WTC11 (cell line): ENCODE measurements at regions of chr1 and their contacts with region 1.

Region 1: DNA sequence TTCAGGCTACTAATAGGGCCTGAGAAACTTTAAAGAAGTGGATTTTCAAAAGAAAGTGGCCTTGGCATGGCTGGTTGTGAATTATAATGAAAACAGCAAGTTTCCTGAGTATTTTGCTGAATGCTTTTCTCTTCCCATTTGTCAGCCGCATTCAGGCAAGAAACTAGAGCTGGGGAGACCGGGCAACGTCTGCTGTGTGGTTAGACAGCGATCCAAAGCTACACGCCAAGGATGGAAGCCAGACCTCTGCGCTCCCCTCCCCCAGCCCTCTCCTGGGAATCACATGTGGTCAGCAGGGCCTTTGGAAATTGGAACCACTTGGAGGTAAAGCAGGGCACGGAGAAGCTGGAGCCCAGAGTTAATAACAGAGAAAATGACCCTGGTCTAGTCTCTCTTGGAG is 114.1 kb upstream of the CD34 start:
- DNase-seq: no peak
- ATAC-seq: no peak
- H3K4me3 Mint-ChIP-seq: no peak overlapping the region
- H3K27ac Mint-ChIP-seq: no peak overlapping the region
- H3K4me1 Mint-ChIP-seq: peaks cover 12% of the 10 kb centered on the region
- H3K27me3 Mint-ChIP-seq: 0 out of 2 replicates have a peak, but pooled peaks cover 3% of the 10 kb centered on the region
- CTCF ChIP-seq: no peak

Region 2: GRCh38 chr1:207956986-207957385 is 68.0 kb before region 1 on chr1:
- CTCF ChIA-PET with region 1: no interaction called
- POLR2A ChIA-PET with region 1: no interaction called
- DNase-seq: no peak
- ATAC-seq: no peak
- H3K4me3 Mint-ChIP-seq: no peak overlapping the region
- H3K27ac Mint-ChIP-seq: no peak overlapping the region
- H3K4me1 Mint-ChIP-seq: peaks cover 11% of the 10 kb centered on the region
- H3K27me3 Mint-ChIP-seq: peaks cover 62% of the 10 kb centered on the region
- CTCF ChIP-seq: no peak

Region 3: GRCh38 chr1:207970329-207971233 is 54.5 kb before region 1 on chr1:
- CTCF ChIA-PET with region 1: no interaction called
- POLR2A ChIA-PET with region 1: no interaction called
- DNase-seq: no peak
- ATAC-seq: no peak
- H3K4me3 Mint-ChIP-seq: no peak overlapping the region
- H3K27ac Mint-ChIP-seq: no peak overlapping the region
- H3K4me1 Mint-ChIP-seq: no peaks in the 10 kb centered on the region
- H3K27me3 Mint-ChIP-seq: no peaks in the 10 kb centered on the region; the same call in 1 of the 2 replicates
- CTCF ChIP-seq: no peak

Region 4: DNA sequence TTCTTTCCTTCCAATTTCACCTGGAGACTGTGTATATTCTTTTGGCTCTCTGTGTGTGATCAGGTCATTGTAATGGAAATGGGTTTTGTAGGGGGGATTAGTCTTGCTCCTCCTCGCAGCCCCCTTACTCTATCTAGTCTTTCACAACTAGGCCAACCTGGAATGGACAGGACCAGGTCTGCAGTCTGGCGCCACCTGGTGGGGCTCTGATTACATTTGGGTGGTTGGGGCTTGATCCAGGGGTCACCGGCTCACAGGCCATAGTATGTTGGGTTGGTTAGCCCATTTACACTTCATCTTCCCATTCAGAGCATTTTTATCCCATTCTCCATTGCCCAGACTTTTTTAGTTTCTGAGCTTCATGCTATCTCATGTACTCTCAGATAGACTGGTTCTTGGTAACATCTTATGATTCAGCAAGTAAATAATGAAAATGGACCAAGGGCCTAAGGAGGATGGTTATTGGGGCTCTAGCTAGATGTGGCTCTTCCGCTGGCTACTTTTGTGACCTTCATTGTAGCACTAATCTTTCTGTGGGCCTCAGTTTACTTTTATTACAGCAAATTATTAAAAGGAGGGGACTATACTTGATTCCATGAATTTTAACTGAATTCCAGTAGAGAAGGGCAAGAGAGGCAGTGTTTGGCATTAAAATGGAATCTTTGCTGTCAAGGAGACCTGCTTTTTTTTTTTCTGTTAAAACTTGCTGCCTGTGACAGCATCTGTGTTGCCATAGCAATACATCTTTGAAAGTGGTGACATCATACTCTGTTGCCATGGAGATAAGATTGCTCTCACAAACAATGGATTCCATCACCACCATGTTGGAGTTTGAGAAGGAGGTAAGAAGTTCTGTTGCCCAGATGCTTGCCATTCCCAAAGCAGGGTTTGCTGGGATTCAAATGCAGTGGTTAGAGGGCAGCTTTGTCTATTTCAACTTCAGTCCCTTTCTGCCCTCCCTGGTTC is 69.0 kb after region 1 on chr1:
- CTCF ChIA-PET with region 1: interaction called, 31 read pairs
- POLR2A ChIA-PET with region 1: no interaction called
- DNase-seq: peak; percentile 89
- ATAC-seq: peak; percentile 98
- H3K4me3 Mint-ChIP-seq: no peak overlapping the region
- H3K27ac Mint-ChIP-seq: 0 out of 2 replicates have a peak overlapping the region, but pooled peaks have one; percentile 27
- H3K4me1 Mint-ChIP-seq: peaks cover 18% of the 10 kb centered on the region
- H3K27me3 Mint-ChIP-seq: no peaks in the 10 kb centered on the region
- CTCF ChIP-seq: peak; percentile 69; the same call in 1 of the 2 replicates

Region 5: DNA sequence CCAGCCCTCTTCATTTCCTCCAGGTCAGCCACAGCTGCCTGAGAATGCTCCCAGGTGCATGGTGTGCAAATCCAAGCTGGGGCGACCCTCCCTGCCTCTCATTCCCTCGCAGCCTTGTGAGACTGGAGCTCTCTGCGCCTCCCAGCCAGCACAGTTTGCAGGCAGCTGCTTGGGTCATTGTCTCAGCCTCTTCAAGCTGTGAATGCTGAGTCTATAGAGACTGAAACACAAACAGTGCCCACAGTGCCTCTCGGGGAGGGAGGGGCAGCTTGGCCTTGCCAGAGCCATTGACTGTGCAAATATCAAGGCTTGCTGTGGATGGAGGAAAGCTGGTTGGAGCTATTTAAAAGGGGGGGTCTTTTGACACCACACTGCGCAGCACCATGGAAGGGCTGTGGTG is 208.5 kb after region 1 on chr1:
- CTCF ChIA-PET with region 1: interaction called, 39 read pairs
- POLR2A ChIA-PET with region 1: interaction called, 3 read pairs
- DNase-seq: peak; percentile 69
- ATAC-seq: peak; percentile 86
- H3K4me3 Mint-ChIP-seq: no peak overlapping the region
- H3K27ac Mint-ChIP-seq: peak overlapping the region; percentile 15
- H3K4me1 Mint-ChIP-seq: peaks cover 63% of the 10 kb centered on the region
- H3K27me3 Mint-ChIP-seq: peaks cover 2% of the 10 kb centered on the region
- CTCF ChIP-seq: no peak

Region 6: DNA sequence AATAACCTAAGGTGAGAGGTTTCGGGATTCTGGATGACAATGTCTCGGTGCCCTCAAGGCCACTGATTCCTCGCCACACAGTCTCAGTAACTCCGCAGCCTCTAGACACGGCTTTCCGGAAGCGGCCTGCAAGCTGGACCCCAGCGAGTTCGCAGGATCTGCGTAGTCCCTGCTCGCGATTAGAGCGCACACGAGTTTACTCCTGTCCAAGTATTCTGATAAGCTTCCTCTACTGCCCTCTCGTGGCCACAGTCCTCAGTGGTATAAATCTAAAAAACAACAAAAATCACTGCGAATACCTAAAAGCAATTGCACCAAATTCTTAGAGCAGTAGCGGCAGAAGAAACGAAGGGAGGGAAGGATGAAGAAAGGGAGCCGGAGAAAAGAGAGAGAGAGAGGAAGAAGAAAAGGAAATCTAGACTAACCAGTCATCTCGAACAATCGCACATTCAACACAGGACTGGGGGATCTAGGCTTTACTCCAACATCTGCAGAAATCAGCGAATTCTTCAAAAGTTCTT is 220.2 kb after region 1 on chr1:
- CTCF ChIA-PET with region 1: interaction called, 56 read pairs
- POLR2A ChIA-PET with region 1: no interaction called
- DNase-seq: peak; percentile 84
- ATAC-seq: peak; percentile 51
- H3K4me3 Mint-ChIP-seq: peak overlapping the region; percentile 79
- H3K27ac Mint-ChIP-seq: no peak overlapping the region
- H3K4me1 Mint-ChIP-seq: peaks cover 24% of the 10 kb centered on the region
- H3K27me3 Mint-ChIP-seq: peaks cover 53% of the 10 kb centered on the region
- CTCF ChIP-seq: peak; percentile 57